Ovary (tissue), 10 donors: ENCODE measurements at regions of chr3 and their contacts with region 1.

Region 1: GRCh38 chr3:125032100-125032643 is 23.6 kb downstream of the HEG1 start:
- DNase-seq: no peak
- H3K4me3 ChIP-seq: no peak overlapping the region
- H3K27ac ChIP-seq: no peak overlapping the region
- H3K4me1 ChIP-seq: no peaks in the 10 kb centered on the region
- H3K27me3 ChIP-seq: no peaks in the 10 kb centered on the region
- CTCF ChIP-seq: no peak
- EP300 ChIP-seq: no peak
- POLR2A ChIP-seq: no peak

Region 2: GRCh38 chr3:124812291-124813265 is 219.6 kb before region 1 on chr3:
- intact Hi-C with region 1: no loop called
- DNase-seq: peak; percentile 53 to 72 (median 68)
- H3K4me3 ChIP-seq: no peak overlapping the region
- H3K27ac ChIP-seq: peak overlapping the region; percentile 36 to 60
- H3K4me1 ChIP-seq: peaks cover 20% of the 10 kb centered on the region
- H3K27me3 ChIP-seq: no peaks in the 10 kb centered on the region
- CTCF ChIP-seq: no peak
- EP300 ChIP-seq: no peak
- POLR2A ChIP-seq: no peak

Region 3: GRCh38 chr3:126064627-126065258 is 1032.6 kb after region 1 on chr3:
- intact Hi-C with region 1: loop called in 1 of 4 experiments (anchors 10 kb)
- DNase-seq: no peak
- H3K4me3 ChIP-seq: no peak overlapping the region
- H3K27ac ChIP-seq: no peak overlapping the region
- H3K4me1 ChIP-seq: peaks cover 8% of the 10 kb centered on the region
- H3K27me3 ChIP-seq: no peaks in the 10 kb centered on the region
- CTCF ChIP-seq: no peak
- EP300 ChIP-seq: no peak
- POLR2A ChIP-seq: no peak